ENCODE measurements at regions of chr19 and their contacts with region 1.

Region 1: DNA sequence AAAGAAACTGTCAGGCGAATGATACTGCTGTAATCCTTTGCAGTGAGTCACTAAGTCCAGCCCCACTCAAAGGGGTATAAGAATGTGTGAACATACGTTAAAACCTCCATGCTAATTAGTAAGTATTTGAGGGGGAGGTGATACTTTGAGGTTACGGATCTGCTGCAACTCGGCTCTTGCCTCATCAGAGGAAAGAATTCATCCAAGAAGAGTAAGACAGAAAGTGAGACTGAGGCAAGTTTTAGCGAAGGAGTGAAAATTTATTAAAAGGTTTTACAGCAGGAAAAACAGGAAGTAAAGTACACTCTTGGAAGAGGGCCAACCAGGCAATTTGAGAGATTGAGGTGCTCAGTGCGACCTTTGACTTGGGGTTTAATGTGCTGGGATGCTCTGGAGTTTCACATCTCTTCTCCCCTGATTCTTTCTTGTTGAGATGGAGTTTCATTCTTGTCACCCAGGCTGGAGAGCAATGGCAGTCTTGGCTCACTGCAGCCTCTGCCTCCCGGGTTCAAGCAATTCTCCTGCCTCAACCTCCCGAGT is 9.8 kb downstream of the CLEC4M start:
- DNase-seq: no peak
- H3K4me3 Mint-ChIP-seq: peak overlapping the region; percentile 24
- H3K27ac Mint-ChIP-seq: peak overlapping the region; percentile 25
- H3K4me1 Mint-ChIP-seq: peaks cover 12% of the 10 kb centered on the region
- H3K27me3 Mint-ChIP-seq: peaks cover 27% of the 10 kb centered on the region

Region 2: DNA sequence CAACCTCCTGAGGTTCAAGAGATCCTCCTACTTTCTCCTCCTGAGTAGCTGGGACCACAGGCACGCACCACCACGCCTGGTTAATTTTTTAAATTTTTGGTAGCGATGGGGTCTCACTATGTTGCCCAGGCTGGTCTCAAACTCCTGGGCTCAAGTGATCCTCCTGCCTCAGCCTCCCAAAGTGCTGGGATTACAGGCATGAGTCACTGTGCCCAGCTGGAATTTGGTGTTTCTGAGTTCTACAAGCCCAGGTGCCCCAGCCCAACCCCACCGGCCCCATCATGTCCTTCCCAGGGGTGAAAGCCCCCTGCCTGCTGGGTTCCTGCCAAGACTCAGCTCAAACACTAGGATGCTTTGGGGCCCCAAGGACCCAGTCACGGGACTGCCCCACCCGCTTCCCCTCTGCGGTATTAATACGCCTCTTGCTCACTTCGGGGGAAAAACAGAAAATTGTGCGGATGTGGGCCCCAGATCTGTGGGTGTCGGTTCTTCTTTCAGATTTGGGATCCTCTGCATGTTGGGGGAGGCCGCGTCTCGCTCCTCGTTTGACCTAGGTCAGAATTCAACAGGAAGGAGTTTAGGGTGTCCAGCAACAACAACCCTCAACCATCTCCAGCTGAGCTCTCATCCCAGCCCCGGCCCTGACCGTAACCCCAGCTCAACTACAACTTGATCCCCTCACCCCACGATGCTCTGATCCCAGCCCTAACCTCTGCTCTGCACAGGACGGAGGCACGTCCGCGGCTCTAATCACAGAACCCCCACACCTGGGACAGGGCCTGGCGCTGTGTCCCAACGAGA is 67.2 kb before region 1 on chr19:
- intact Hi-C with region 1: loop called (anchors 2 kb)
- DNase-seq: peak; percentile 89
- H3K4me3 Mint-ChIP-seq: peak overlapping the region; percentile 77
- H3K27ac Mint-ChIP-seq: peak overlapping the region; percentile 85
- H3K4me1 Mint-ChIP-seq: peaks cover 20% of the 10 kb centered on the region
- H3K27me3 Mint-ChIP-seq: peaks cover 16% of the 10 kb centered on the region

Region 3: GRCh38 chr19:7751157-7751783 is 21.6 kb before region 1 on chr19:
- intact Hi-C with region 1: loop called (anchors 1 kb)
- DNase-seq: no peak
- H3K4me3 Mint-ChIP-seq: no peak overlapping the region
- H3K27ac Mint-ChIP-seq: peak overlapping the region; percentile 35
- H3K4me1 Mint-ChIP-seq: peaks cover 2% of the 10 kb centered on the region
- H3K27me3 Mint-ChIP-seq: peaks cover 2% of the 10 kb centered on the region

Region 4: GRCh38 chr19:7806876-7807275 is 34.1 kb after region 1 on chr19:
- intact Hi-C with region 1: loop called (anchors 2 kb)
- DNase-seq: no peak
- H3K4me3 Mint-ChIP-seq: no peak overlapping the region
- H3K27ac Mint-ChIP-seq: no peak overlapping the region
- H3K4me1 Mint-ChIP-seq: peaks cover 7% of the 10 kb centered on the region
- H3K27me3 Mint-ChIP-seq: peaks cover 24% of the 10 kb centered on the region

Region 5: DNA sequence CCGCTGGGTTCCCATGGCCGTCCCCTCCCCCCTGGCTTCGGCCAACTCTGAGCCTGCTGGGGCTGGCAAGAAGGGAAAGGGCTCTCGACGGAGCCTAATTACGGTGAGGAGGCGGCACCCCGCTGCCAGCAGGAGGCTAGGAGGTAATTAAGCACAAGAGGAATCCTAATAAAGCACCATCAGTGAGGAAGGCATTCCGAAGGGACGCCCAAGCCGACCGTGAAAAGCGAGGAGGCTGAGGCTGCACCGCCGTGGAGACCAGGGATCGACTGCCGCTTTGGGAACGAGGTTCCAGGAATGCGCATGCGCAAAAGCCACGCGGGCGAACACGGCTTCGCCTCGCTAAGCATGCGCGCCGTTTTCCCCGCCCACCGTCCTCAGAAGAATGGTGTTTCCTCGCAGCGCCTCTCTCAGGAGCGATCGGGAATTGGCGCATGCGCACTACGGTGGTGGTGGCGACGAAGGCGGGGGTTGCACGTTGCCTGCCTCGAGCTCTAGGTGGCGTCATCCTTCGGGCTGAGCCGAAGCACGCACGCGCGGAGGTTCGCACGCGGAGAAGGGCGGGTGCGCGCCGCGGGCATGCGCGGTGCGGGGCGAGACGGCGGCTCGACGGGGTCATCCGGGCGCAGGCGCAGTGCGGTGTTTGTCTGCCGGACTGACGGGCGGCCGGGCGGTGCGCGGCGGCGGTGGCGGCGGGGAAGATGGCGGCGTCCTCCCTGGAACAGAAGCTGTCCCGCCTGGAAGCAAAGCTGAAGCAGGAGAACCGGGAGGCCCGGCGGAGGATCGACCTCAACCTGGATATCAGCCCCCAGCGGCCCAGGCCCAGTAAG is 130.6 kb after region 1 on chr19 and contains the start of gene MAP2K7:
- intact Hi-C with region 1: no loop called
- DNase-seq: peak; percentile 100
- H3K4me3 Mint-ChIP-seq: peak within 1 kb of the TSS; percentile 93
- H3K27ac Mint-ChIP-seq: peak within 1 kb of the TSS; percentile 96
- H3K4me1 Mint-ChIP-seq: peaks cover 25% of the 10 kb centered on the region
- H3K27me3 Mint-ChIP-seq: peaks cover 3% of the 10 kb centered on the region
- total RNA-seq, gene MAP2K7: 46.7 and 47.6 TPM in 2 replicates

Region 6: GRCh38 chr19:7943444-7944176 is 170.8 kb after region 1 on chr19 and contains the start of gene TIMM44:
- intact Hi-C with region 1: no loop called
- DNase-seq: peak; percentile 100
- H3K4me3 Mint-ChIP-seq: peak within 1 kb of the TSS; percentile 98
- H3K27ac Mint-ChIP-seq: peak within 1 kb of the TSS; percentile 98
- H3K4me1 Mint-ChIP-seq: peaks cover 22% of the 10 kb centered on the region
- H3K27me3 Mint-ChIP-seq: no peaks in the 10 kb centered on the region
- total RNA-seq, gene TIMM44: 110 and 111 TPM in 2 replicates

Measured in activated CD4-positive, alpha-beta T cell treated with anti-CD3 and anti-CD28 coated beads, Interleukin-2, amount 10 ng/mL, durations not matched to agents 24 days and 14 days (primary cell).